Activated B cell treated with CpG ODN at 0.5 μM for 24 hours (primary cell): ENCODE measurements at regions of chr14 and their contacts with region 1.

Region 1: GRCh38 chr14:77040059-77040740 is 11.7 kb upstream of the IRF2BPL start:
- DNase-seq: peak; percentile 85
- ATAC-seq: peak; percentile 70
- H3K4me3 Mint-ChIP-seq: peak overlapping the region; percentile 80
- H3K27ac Mint-ChIP-seq: peak overlapping the region; percentile 96
- H3K4me1 Mint-ChIP-seq: peaks cover 89% of the 10 kb centered on the region
- H3K27me3 Mint-ChIP-seq: no peaks in the 10 kb centered on the region
- CTCF ChIP-seq: no peak

Region 2: DNA sequence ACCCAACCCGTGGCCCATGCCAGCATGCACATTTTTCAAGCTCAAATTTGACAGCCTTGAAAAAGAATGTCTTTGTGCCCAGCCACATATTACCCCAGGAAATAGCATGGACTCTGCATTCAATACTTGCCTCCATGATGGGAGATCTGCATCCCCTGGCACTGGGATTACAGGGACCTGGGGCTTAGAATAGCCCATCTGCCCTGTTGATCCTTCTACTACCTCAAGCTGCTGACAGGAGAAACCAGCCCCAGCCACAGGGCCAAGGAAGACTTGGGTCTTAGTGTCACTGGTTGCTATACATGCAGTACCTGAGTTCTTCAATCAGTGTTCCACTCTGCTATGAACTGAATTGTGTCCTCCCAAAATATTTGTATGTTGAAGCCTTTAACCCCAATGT is 128.7 kb before region 1 on chr14:
- CTCF ChIA-PET with region 1: interaction called, 15 read pairs
- POLR2A ChIA-PET with region 1: interaction called, 8 read pairs
- intact Hi-C with region 1: no loop called
- DNase-seq: no peak
- ATAC-seq: no peak
- H3K4me3 Mint-ChIP-seq: no peak overlapping the region
- H3K27ac Mint-ChIP-seq: no peak overlapping the region
- H3K4me1 Mint-ChIP-seq: peaks cover 20% of the 10 kb centered on the region
- H3K27me3 Mint-ChIP-seq: no peaks in the 10 kb centered on the region
- CTCF ChIP-seq: no peak

Region 3: GRCh38 chr14:76956316-76957090 is 83.7 kb before region 1 on chr14:
- CTCF ChIA-PET with region 1: interaction called, 7 read pairs
- POLR2A ChIA-PET with region 1: interaction called, 48 read pairs
- intact Hi-C with region 1: loop called (anchors 1 kb)
- DNase-seq: peak; percentile 75
- ATAC-seq: peak; percentile 68
- H3K4me3 Mint-ChIP-seq: peak overlapping the region; percentile 86
- H3K27ac Mint-ChIP-seq: peak overlapping the region; percentile 94
- H3K4me1 Mint-ChIP-seq: peaks cover 75% of the 10 kb centered on the region
- H3K27me3 Mint-ChIP-seq: no peaks in the 10 kb centered on the region
- CTCF ChIP-seq: no peak

Region 4: DNA sequence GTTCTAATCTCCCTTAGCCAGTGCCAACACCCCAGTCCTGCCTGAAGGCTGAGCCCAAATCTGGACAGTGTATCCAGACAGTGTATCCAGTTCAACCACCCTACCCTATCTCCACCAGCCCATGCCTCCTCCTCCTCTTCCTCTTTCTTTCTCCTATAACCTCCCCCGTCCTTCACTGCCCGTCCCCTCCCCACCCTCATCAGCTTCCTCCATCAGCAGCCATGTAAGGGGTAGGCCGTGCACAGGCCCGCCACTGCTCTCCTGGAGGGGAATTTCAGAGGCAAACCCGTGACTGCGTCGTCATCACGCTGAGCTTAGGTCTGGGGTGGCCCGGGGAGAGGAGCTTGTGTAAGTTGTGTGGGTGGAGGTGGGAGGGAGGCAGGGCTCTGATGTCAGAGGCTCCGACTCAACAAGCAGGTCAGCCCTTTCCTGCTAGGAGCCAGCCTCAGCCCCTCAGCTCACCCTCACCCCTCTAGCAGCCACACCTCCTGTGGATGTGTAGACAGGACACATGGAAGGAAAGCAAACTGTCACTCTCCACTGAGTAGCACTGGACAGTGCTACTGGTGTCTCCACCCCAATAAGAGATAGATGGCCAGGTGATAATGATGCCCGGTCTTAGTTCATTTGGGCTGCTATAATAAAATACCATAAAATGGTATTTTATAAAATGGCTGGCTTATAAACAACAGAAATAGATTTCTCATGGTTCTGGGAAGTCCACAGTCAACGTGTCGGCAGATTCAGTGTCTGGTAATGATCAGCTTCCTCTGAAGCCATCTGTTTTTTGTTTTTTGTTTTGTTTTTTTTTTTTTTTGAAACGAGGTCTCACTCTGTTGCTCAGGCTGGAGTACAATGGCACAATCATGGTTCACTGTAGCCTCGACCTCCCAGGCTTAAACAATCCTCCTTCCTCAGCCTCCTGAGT is 62.1 kb before region 1 on chr14:
- CTCF ChIA-PET with region 1: no interaction called
- POLR2A ChIA-PET with region 1: interaction called, 31 read pairs
- intact Hi-C with region 1: no loop called
- DNase-seq: peak; percentile 74
- ATAC-seq: peak; percentile 96
- H3K4me3 Mint-ChIP-seq: peak overlapping the region; percentile 63
- H3K27ac Mint-ChIP-seq: peak overlapping the region; percentile 88
- H3K4me1 Mint-ChIP-seq: peaks cover 31% of the 10 kb centered on the region
- H3K27me3 Mint-ChIP-seq: no peaks in the 10 kb centered on the region
- CTCF ChIP-seq: no peak

Region 5: GRCh38 chr14:77053046-77053841 is 13.0 kb after region 1 on chr14:
- CTCF ChIA-PET with region 1: interaction called, 14 read pairs
- POLR2A ChIA-PET with region 1: interaction called, 6 read pairs
- intact Hi-C with region 1: no loop called
- DNase-seq: peak; percentile 79
- ATAC-seq: peak; percentile 90
- H3K4me3 Mint-ChIP-seq: no peak overlapping the region
- H3K27ac Mint-ChIP-seq: peak overlapping the region; percentile 24
- H3K4me1 Mint-ChIP-seq: peaks cover 8% of the 10 kb centered on the region
- H3K27me3 Mint-ChIP-seq: no peaks in the 10 kb centered on the region
- CTCF ChIP-seq: peak; percentile 74